ENCODE measurements at regions of chr17 and their contacts with region 1.

Region 1: GRCh38 chr17:81253358-81254131 is 14.4 kb downstream of the NDUFAF8 start:
- DNase-seq: peak in 1 of 2 experiments; percentile 74
- H3K4me3 ChIP-seq: no peak overlapping the region
- H3K27ac ChIP-seq: no peak overlapping the region
- H3K4me1 ChIP-seq: peaks cover 0 to 8% (median 2%) of the 10 kb centered on the region in 4 experiments; a peak in 3 of 7 replicates
- H3K27me3 ChIP-seq: no peaks in the 10 kb centered on the region
- CTCF ChIP-seq: peak; percentile 74 to 88 (median 87)
- EP300 ChIP-seq: no peak
- POLR2A ChIP-seq: no peak
- RAD21 ChIP-seq: peak; percentile 89 to 98

Region 2: GRCh38 chr17:81277421-81277820 is 23.9 kb after region 1 on chr17:
- CTCF ChIA-PET with region 1: interaction called, 15 read pairs
- POLR2A ChIA-PET with region 1: no interaction called
- DNase-seq: no peak
- H3K4me3 ChIP-seq: no peak overlapping the region
- H3K27ac ChIP-seq: no peak overlapping the region
- H3K4me1 ChIP-seq: peaks cover 0 to 4% (median 0%) of the 10 kb centered on the region in 4 experiments; a peak in 1 of 7 replicates
- H3K27me3 ChIP-seq: no peaks in the 10 kb centered on the region
- CTCF ChIP-seq: no peak
- EP300 ChIP-seq: no peak
- POLR2A ChIP-seq: no peak
- RAD21 ChIP-seq: no peak

Region 3: DNA sequence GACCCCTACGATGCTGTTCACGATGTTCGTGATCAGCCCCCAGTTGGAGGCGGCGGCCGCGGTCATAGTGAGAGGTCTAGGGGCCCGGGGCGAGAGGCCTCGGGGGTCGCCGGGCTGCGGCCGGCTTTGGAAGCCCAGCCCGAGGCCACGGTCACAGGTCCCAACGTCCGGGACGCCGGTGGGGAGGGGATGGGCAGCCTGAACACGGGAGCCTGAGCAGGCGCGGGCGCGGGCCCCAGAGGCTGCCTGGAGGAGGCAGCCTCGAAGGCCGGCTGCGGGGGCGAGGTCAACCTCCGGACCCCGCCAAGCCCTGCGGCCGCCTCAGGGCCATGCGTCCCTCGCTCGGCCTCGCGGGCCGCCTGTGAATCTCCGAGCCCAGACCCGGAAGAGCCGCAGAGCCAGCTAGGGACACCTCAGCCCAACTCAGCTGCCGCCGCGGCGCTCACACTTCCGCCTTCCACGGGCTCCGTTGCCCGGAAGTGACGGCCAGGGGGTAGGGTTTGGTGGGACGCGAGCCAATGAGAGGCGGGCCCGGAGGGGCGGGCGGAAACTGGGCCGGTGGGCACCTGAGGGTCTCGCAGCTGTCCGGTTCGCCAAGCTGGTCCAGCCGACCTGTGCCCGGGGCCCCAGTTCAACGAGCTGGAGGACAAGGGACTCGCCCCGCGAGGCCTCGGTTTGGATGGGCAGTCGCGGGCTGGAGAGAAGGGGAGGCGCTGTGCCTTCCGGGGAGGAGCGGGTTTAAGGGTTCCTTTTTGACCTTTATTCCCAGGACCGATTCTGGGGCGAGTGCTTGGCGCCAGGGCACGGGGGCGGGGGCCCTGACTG is 41.5 kb after region 1 on chr17 and contains the start of gene SLC38A10:
- CTCF ChIA-PET with region 1: interaction called, 12 read pairs
- POLR2A ChIA-PET with region 1: interaction called, 3 read pairs
- DNase-seq: peak; percentile 21 to 92
- H3K4me3 ChIP-seq: peak within 1 kb of the TSS; percentile 65 to 89 (median 74)
- H3K27ac ChIP-seq: peak within 1 kb of the TSS; percentile 29; the same call in 1 of the 2 replicates
- H3K4me1 ChIP-seq: peaks cover 3 to 6% (median 4%) of the 10 kb centered on the region in 4 experiments; a peak in 5 of 7 replicates
- H3K27me3 ChIP-seq: no peaks in the 10 kb centered on the region
- CTCF ChIP-seq: 0 out of 4 replicates have a peak, but pooled peaks of 1 of the 3 experiments have one; percentile 1
- EP300 ChIP-seq: no peak
- POLR2A ChIP-seq: peak in 1 of 2 experiments; percentile 81; a peak in 2 of 3 replicates
- RAD21 ChIP-seq: no peak
- total RNA-seq, gene SLC38A10: 35.7 and 41.0 TPM in 2 replicates

Region 4: DNA sequence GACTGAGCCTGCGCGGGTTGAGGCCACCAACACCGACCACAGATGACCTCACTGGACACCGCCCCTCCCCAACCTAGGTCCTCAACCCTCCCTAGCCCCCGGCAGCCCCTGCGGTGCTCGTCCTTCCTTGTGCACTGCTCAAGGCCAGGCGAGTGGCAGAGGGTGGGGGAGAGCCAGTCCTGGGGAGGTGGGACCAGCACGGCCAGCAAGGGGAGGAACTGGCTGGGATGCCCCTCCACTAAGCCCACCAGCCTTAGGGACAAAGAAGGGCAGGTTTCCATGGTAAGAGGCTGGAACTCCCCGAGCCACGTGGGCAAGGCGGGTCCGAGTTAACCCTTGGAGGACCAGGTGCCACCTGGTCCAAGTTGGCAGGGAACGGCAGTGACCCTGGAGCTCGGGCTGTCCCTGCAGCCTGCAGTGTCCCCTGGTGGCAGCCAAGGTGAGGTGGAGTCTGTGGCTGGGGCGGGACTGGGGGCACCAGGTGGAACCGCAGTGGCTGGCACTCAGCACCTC is 283.9 kb after region 1 on chr17:
- CTCF ChIA-PET with region 1: interaction called, 23 read pairs
- POLR2A ChIA-PET with region 1: interaction called, 7 read pairs
- DNase-seq: peak in 1 of 2 experiments; percentile 86
- H3K4me3 ChIP-seq: peak overlapping the region in 1 of 4 experiments; percentile 51; a peak in 4 of 8 replicates
- H3K27ac ChIP-seq: no peak overlapping the region
- H3K4me1 ChIP-seq: peaks cover 0 to 11% (median 5%) of the 10 kb centered on the region in 4 experiments; a peak in 5 of 7 replicates
- H3K27me3 ChIP-seq: peaks cover 8 to 28% (median 24%) of the 10 kb centered on the region in 4 experiments; a peak in 6 of 7 replicates
- CTCF ChIP-seq: peak; percentile 91 to 97 (median 94)
- EP300 ChIP-seq: no peak
- POLR2A ChIP-seq: no peak; a peak in 1 of 3 replicates
- RAD21 ChIP-seq: peak; percentile 86 to 91